Activated CD4-positive, alpha-beta memory T cell treated with anti-CD3 and anti-CD28 coated beads, Interleukin-2, amount 10 ng/mL, durations not matched to agents 7 days and 5 days (primary cell): ENCODE measurements at regions of chrX and their contacts with region 1.

Region 1: DNA sequence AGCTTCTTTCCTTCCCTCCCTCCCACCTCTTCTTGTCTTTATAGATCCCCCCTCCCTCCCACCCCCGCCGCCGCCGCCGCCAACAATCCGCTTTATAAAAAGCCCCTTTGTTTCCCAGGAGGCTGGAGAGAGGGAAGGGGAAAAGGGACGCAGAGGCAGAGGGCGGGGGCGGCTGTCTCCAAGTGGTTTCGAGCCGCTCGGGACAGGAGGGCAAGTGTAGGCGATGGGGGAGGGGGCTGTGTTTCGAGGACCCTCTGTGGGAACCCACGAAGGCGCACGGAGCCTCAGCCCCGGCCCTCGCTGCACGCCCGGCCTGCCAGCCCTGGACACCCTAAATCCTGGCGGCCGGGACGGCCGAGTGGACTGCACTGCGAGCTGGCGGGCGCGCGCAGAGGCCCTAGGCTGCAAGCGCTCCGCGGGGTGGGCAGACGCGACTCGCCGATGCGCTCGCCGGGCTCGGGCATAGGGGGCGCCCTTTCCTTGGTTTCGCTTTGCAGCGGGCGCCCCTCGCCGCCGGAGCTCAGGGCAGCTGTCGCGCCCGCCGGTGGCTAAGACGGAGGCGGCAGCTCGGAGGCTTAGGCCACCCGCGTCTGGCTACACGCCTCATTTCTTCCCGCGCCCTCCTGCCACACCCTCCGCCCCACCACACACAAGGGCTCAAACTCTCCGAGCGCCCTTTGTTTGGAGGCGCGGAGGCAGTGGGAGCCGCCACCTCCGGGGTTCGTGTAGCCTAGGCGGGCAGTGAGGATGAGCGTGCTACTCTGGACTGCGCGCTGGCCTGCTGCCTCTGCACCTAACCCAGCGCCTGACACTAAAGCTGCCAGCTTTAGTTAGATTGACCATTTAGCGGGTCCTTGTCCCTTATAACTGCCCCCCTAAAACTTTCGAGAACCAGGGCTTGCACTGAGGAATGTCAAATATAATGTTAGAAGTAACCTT is 2.2 kb downstream of the MAMLD1 start:
- DNase-seq: peak; percentile 75
- H3K4me3 Mint-ChIP-seq: peak overlapping the region; percentile 79
- H3K27ac Mint-ChIP-seq: peak overlapping the region; percentile 47
- H3K4me1 Mint-ChIP-seq: peaks cover 24% of the 10 kb centered on the region
- H3K27me3 Mint-ChIP-seq: peaks cover 16% of the 10 kb centered on the region

Region 2: DNA sequence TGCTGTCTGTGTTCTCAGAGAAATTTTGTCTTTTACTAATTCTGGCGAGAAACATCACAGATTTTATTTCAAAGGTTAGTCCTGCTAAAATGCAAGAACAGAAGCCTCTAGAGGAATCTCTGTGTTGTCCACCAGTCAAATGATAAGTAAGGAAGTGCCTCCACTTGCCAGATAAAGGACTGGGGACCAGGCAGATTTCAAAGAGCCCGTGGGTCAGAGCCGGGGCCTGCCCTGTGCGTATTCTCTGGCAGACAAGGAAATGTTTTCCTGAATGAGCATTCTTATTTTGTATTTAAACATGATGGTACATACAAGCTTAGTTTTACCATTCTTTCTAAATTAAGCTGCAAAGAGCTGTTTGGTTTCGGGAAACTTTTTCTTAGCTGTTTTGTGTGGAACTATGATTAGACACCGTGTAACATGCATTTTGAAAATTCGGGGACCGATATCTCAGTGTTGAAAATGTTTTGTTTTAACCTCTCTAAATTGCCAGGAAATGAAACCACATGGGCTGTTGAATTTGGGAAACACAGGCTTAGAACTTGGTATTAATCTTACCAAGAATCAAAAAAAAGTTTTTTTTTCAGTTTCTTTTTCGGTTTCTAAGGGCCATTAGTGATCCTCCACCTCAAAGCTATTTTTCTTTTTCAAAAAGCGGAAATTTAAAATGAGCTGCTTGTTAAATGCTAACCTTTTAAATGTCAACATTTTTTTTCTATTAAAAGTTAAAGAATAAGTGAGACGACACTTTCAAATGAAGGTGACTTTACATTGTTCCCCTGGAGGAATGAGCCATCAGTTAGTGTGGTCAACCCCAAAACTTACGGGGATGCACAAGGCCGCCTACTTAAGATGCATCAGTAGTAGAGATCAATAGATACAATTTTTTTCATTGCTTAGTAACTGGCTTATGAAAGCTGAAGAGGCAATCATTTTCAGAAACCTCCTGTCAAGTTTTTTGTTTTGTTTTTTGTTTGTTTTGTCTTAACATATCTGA is 113.5 kb after region 1 on chrX:
- CTCF ChIA-PET with region 1: interaction called, 36 read pairs
- POLR2A ChIA-PET with region 1: interaction called, 11 read pairs
- DNase-seq: peak; percentile 49
- H3K4me3 Mint-ChIP-seq: peak overlapping the region; percentile 70
- H3K27ac Mint-ChIP-seq: peak overlapping the region; percentile 95
- H3K4me1 Mint-ChIP-seq: peaks cover 69% of the 10 kb centered on the region
- H3K27me3 Mint-ChIP-seq: no peaks in the 10 kb centered on the region

Region 3: GRCh38 chrX:150486011-150486410 is 120.7 kb after region 1 on chrX:
- CTCF ChIA-PET with region 1: interaction called, 36 read pairs
- POLR2A ChIA-PET with region 1: interaction called, 7 read pairs
- DNase-seq: peak; percentile 57
- H3K4me3 Mint-ChIP-seq: no peak overlapping the region
- H3K27ac Mint-ChIP-seq: no peak overlapping the region
- H3K4me1 Mint-ChIP-seq: peaks cover 44% of the 10 kb centered on the region
- H3K27me3 Mint-ChIP-seq: no peaks in the 10 kb centered on the region